Activated B cell treated with CpG ODN at 0.5 μM for 24 hours (primary cell): ENCODE measurements at regions of chr2 and their contacts with region 1.

Region 1: GRCh38 chr2:44479122-44479887 is 117.6 kb downstream of the CAMKMT start:
- DNase-seq: no peak
- ATAC-seq: peak; percentile 100
- H3K4me3 Mint-ChIP-seq: no peak overlapping the region
- H3K27ac Mint-ChIP-seq: no peak overlapping the region
- H3K4me1 Mint-ChIP-seq: peaks cover 3% of the 10 kb centered on the region
- H3K27me3 Mint-ChIP-seq: no peaks in the 10 kb centered on the region
- CTCF ChIP-seq: peak; percentile 100

Region 2: GRCh38 chr2:44244129-44244871 is 235.0 kb before region 1 on chr2:
- CTCF ChIA-PET with region 1: interaction called, 3 read pairs
- POLR2A ChIA-PET with region 1: interaction called, 3 read pairs
- intact Hi-C with region 1: loop called (anchors 5 kb)
- DNase-seq: no peak
- ATAC-seq: peak; percentile 91
- H3K4me3 Mint-ChIP-seq: peak overlapping the region; percentile 67
- H3K27ac Mint-ChIP-seq: peak overlapping the region; percentile 27
- H3K4me1 Mint-ChIP-seq: peaks cover 12% of the 10 kb centered on the region
- H3K27me3 Mint-ChIP-seq: no peaks in the 10 kb centered on the region
- CTCF ChIP-seq: no peak

Region 3: DNA sequence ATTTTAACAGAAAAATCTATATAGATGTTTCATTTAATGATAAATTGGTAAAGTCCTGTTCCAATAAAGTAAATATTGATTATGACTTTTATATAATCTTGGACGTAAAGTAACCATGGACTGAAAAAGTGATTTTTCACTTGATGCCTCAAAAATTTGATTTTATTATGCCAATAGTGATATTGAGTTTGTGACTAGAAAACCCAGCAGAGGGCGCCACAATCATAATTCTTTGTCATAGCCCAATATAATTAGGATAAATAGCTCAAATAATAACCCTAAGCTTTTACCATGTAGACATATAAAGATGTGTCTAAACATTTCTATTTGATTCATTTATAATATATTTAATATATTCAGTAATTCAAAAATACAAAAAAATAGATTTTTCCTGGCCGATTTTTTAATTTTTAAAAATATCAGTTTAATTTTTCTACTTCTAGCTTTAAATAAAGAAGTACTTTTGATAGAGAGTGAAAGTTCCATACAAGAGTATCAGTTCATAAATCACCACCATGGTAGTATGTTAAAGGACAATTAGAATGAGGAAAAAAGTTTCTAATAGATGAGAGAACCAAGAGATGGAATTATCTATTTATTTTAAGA is 86.9 kb before region 1 on chr2:
- CTCF ChIA-PET with region 1: interaction called, 8 read pairs
- POLR2A ChIA-PET with region 1: no interaction called
- intact Hi-C with region 1: loop called (anchors 5 kb)
- DNase-seq: no peak
- ATAC-seq: no peak
- H3K4me3 Mint-ChIP-seq: no peak overlapping the region
- H3K27ac Mint-ChIP-seq: no peak overlapping the region
- H3K4me1 Mint-ChIP-seq: peaks cover 3% of the 10 kb centered on the region
- H3K27me3 Mint-ChIP-seq: no peaks in the 10 kb centered on the region
- CTCF ChIP-seq: peak; percentile 81

Region 4: GRCh38 chr2:44494006-44494405 is 14.7 kb after region 1 on chr2:
- CTCF ChIA-PET with region 1: interaction called, 10 read pairs
- POLR2A ChIA-PET with region 1: no interaction called
- intact Hi-C with region 1: no loop called
- DNase-seq: no peak
- ATAC-seq: no peak
- H3K4me3 Mint-ChIP-seq: no peak overlapping the region
- H3K27ac Mint-ChIP-seq: no peak overlapping the region
- H3K4me1 Mint-ChIP-seq: no peaks in the 10 kb centered on the region
- H3K27me3 Mint-ChIP-seq: no peaks in the 10 kb centered on the region
- CTCF ChIP-seq: no peak

Region 5: GRCh38 chr2:44715671-44716081 is 236.4 kb after region 1 on chr2:
- CTCF ChIA-PET with region 1: interaction called, 6 read pairs
- POLR2A ChIA-PET with region 1: no interaction called
- intact Hi-C with region 1: loop called (anchors 1 kb)
- DNase-seq: no peak
- ATAC-seq: no peak
- H3K4me3 Mint-ChIP-seq: no peak overlapping the region
- H3K27ac Mint-ChIP-seq: peak overlapping the region; percentile 46
- H3K4me1 Mint-ChIP-seq: peaks cover 47% of the 10 kb centered on the region
- H3K27me3 Mint-ChIP-seq: no peaks in the 10 kb centered on the region
- CTCF ChIP-seq: no peak

Region 6: GRCh38 chr2:44802777-44803424 is 323.6 kb after region 1 on chr2:
- CTCF ChIA-PET with region 1: interaction called, 13 read pairs
- POLR2A ChIA-PET with region 1: no interaction called
- intact Hi-C with region 1: loop called (anchors 10 kb)
- DNase-seq: no peak
- ATAC-seq: no peak
- H3K4me3 Mint-ChIP-seq: peak overlapping the region; percentile 52
- H3K27ac Mint-ChIP-seq: no peak overlapping the region
- H3K4me1 Mint-ChIP-seq: peaks cover 23% of the 10 kb centered on the region
- H3K27me3 Mint-ChIP-seq: peaks cover 81% of the 10 kb centered on the region
- CTCF ChIP-seq: no peak

Region 7: DNA sequence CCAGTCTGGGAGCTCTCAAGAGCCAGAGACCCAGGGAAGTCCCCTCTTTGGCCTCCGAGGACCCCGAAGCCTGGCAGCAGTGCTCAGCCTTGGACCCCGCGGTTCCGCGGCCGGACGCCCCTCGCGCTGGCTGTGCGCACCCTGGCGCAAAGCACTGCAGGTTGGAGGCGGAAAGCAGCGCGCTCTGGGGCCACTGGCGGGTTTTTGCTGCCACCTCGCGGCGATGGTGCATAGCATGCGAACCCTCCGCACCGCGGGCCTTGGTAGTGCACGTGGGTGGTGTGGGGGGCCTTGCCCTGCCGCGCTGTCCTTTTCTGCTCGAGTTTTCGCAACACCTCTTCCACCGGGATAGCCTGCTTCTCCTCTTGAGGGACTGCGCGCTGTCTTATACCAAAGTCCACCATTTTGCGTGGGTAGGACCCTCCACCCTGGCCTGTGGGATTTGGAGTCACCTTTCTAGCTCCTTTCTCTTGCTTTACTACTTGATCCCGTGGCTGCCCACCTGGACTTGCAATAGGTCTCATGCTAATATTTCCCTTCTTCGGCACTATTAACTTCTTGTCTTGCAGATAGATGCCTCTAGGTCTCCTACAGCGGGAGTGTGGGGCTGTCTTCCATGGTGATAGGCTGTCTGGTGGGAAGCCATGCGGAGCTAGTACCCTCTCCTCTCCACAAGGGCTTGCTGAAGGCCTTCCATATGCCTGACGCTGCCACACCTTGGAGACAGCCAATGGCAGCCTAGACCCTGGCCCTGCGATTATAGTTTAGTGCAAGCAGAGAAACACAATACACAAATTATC is 476.5 kb after region 1 on chr2:
- CTCF ChIA-PET with region 1: interaction called, 139 read pairs
- POLR2A ChIA-PET with region 1: interaction called, 3 read pairs
- intact Hi-C with region 1: loop called (anchors 1 kb)
- DNase-seq: peak; percentile 79
- ATAC-seq: peak; percentile 86
- H3K4me3 Mint-ChIP-seq: peak overlapping the region; percentile 63
- H3K27ac Mint-ChIP-seq: no peak overlapping the region
- H3K4me1 Mint-ChIP-seq: peaks cover 38% of the 10 kb centered on the region
- H3K27me3 Mint-ChIP-seq: peaks cover 67% of the 10 kb centered on the region
- CTCF ChIP-seq: peak; percentile 79